IMR-90 (cell line): ENCODE measurements at regions of chr13 and their contacts with region 1.

Region 1: DNA sequence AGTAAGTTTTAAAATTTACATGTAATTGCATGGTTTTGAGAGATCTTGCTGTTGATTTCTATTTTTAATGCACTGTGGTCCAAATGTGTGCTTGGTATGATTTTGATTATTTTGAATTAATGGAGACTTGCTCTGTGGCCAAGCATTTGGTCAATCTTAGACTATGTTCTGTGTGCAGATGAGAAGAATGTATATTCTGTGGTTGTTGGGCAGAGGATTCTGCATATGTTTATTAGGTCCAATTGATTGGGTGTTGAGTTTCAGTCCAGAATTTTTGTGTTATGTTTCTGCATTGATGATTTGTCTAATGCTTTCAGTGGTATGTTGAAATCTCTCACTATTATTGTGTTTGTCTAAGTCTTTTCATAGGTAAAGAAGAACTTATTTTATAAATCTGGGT is 82.3 kb downstream of the TDRD3 start:
- DNase-seq: no peak
- ATAC-seq: no peak
- H3K4me3 ChIP-seq: no peak overlapping the region
- H3K27ac ChIP-seq: no peak overlapping the region
- H3K4me1 ChIP-seq: no peaks in the 10 kb centered on the region
- H3K27me3 ChIP-seq: no peaks in the 10 kb centered on the region
- CTCF ChIP-seq: no peak
- POLR2A ChIP-seq: no peak
- RAD21 ChIP-seq: no peak

Region 2: GRCh38 chr13:60356970-60357369 is 122.3 kb before region 1 on chr13:
- CTCF ChIA-PET with region 1: no interaction called
- POLR2A ChIA-PET with region 1: no interaction called
- dilution Hi-C with region 1: no loop called
- in situ Hi-C with region 1: no loop called
- intact Hi-C with region 1: no loop called
- DNase-seq: no peak
- ATAC-seq: no peak
- H3K4me3 ChIP-seq: no peak overlapping the region
- H3K27ac ChIP-seq: no peak overlapping the region
- H3K4me1 ChIP-seq: no peaks in the 10 kb centered on the region
- H3K27me3 ChIP-seq: no peaks in the 10 kb centered on the region; the same call in none of the 2 replicates
- CTCF ChIP-seq: no peak
- POLR2A ChIP-seq: no peak
- RAD21 ChIP-seq: no peak

Region 3: DNA sequence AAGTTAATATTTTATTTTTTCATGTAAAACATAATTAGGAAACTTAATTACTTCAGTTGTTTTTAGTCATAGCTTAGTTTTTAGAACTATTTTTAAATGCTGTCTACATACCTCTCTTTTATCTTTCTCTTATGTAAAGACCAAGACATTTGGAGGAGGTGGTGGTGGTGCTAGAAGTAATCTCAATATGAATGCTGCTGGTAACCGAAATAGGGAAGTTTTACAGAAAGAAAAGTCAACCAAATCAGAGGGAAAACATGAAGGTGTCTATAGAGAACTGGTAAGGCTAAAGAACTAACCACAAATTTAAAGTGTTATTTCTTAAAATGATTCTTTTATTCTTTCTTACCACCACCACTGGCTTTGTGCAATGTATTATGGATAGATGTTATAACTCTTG is 15.0 kb after region 1 on chr13:
- CTCF ChIA-PET with region 1: no interaction called
- POLR2A ChIA-PET with region 1: no interaction called
- dilution Hi-C with region 1: no loop called
- in situ Hi-C with region 1: no loop called
- intact Hi-C with region 1: no loop called
- DNase-seq: no peak
- ATAC-seq: no peak
- H3K4me3 ChIP-seq: no peak overlapping the region
- H3K27ac ChIP-seq: no peak overlapping the region
- H3K4me1 ChIP-seq: no peaks in the 10 kb centered on the region
- H3K27me3 ChIP-seq: no peaks in the 10 kb centered on the region
- CTCF ChIP-seq: no peak
- POLR2A ChIP-seq: no peak
- RAD21 ChIP-seq: no peak

Region 4: DNA sequence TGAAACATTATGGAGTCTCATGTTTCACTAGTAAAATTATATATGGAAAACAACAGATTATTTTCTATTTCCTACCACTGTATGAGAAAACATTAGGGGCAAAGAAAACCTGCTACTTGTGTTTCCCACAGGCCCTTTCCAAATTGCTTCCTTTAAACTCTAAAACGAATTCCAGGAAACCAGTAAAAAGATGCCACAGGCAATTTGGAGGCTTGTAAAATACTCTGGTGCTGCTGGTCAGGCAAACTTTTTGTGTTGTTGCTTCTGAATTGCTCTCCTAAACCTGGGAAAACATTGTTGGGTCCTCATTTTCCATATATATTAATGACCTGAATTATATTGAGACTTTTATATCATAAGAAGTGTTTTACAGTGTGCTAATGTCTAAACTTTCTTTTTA is 59.3 kb after region 1 on chr13:
- CTCF ChIA-PET with region 1: no interaction called
- POLR2A ChIA-PET with region 1: no interaction called
- dilution Hi-C with region 1: no loop called
- in situ Hi-C with region 1: no loop called
- intact Hi-C with region 1: no loop called
- DNase-seq: no peak
- ATAC-seq: no peak
- H3K4me3 ChIP-seq: no peak overlapping the region
- H3K27ac ChIP-seq: no peak overlapping the region
- H3K4me1 ChIP-seq: no peaks in the 10 kb centered on the region
- H3K27me3 ChIP-seq: no peaks in the 10 kb centered on the region
- CTCF ChIP-seq: no peak
- POLR2A ChIP-seq: no peak
- RAD21 ChIP-seq: no peak

Region 5: GRCh38 chr13:60617991-60618733 is 138.9 kb after region 1 on chr13:
- CTCF ChIA-PET with region 1: no interaction called
- POLR2A ChIA-PET with region 1: no interaction called
- dilution Hi-C with region 1: no loop called
- in situ Hi-C with region 1: loop called (anchors 10 kb)
- intact Hi-C with region 1: no loop called
- DNase-seq: peak; percentile 36
- ATAC-seq: peak; percentile 57
- H3K4me3 ChIP-seq: no peak overlapping the region
- H3K27ac ChIP-seq: no peak overlapping the region
- H3K4me1 ChIP-seq: no peaks in the 10 kb centered on the region
- H3K27me3 ChIP-seq: peaks cover 3% of the 10 kb centered on the region; the same call in 1 of the 2 replicates
- CTCF ChIP-seq: peak; percentile 47
- POLR2A ChIP-seq: no peak
- RAD21 ChIP-seq: peak; percentile 61